Mammary epithelial cell (primary cell): ENCODE measurements at regions of chr21 and their contacts with region 1.

Region 1: GRCh38 chr21:31659536-31660258 is at the start of gene SOD1:
- DNase-seq: peak; percentile 91
- H3K4me3 ChIP-seq: peak within 1 kb of the TSS; percentile 95 to 99 (median 96)
- H3K27ac ChIP-seq: peak within 1 kb of the TSS; percentile 57
- H3K4me1 ChIP-seq: peaks cover 11% of the 10 kb centered on the region
- H3K27me3 ChIP-seq: no peaks in the 10 kb centered on the region
- CTCF ChIP-seq: no peak
- total RNA-seq, gene SOD1: 104 to 184 TPM

Region 2: DNA sequence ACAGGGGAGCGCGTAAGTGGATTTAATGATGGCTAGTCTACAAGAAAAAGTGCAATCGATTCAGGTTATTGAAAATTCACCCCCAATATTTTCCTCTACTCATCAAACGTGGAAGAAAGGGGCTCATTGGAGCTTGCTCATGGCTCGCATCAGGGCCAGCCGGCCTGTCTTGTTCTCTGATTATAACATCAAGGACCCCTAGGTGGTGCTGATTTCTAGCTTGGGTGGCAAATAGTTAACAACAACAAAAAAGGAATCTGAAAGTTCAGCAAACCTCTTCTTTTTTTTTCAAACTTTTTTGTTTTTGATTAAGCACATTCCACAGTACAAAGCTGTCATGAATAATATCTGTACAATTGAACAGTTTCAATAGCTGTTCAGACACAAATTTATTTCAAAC is 36.0 kb before region 1 on chr21:
- CTCF ChIA-PET with region 1: no interaction called
- dilution Hi-C with region 1: no loop called
- in situ Hi-C with region 1: no loop called
- intact Hi-C with region 1: loop called (anchors 5 kb)
- DNase-seq: no peak
- H3K4me3 ChIP-seq: no peak overlapping the region
- H3K27ac ChIP-seq: no peak overlapping the region
- H3K4me1 ChIP-seq: no peaks in the 10 kb centered on the region
- H3K27me3 ChIP-seq: no peaks in the 10 kb centered on the region
- CTCF ChIP-seq: peak in 1 of 2 donors; percentile 7

Region 3: DNA sequence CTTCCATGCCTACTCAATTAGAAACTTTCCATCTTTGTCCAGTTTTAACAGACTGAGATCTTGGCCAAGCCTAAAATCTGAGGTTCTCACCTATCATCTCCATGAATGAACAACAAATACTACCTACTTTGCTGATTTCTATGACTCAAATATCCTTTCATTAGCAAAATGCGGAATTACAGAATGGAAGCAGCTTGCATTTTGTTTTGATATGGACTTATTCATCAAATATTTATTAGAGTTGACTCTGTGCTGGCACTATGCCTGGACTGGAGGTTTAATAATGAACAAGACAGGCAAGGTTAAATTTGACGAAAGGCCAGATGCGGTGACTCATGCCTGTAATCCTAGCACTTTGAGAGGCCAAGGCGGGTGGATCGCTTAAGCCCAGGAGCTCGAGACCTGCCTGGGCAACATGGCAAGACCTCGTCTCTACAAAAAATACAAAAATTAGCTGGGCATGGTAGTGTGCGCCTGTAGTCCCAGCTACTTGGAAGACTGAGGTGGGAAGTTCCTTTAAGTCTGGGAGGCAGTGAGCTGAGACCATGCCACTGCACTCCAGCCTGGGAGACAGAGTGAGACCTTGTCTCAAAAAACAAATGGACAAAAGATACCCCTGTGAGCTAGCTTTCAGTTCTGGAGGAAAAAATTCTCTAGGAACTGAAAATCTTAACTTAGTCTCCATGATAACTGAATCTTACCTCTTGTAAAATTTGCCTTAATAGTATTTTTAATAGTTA is 29.6 kb before region 1 on chr21:
- CTCF ChIA-PET with region 1: no interaction called
- dilution Hi-C with region 1: no loop called
- in situ Hi-C with region 1: no loop called
- intact Hi-C with region 1: loop called (anchors 2 kb)
- DNase-seq: peak; percentile 98
- H3K4me3 ChIP-seq: no peak overlapping the region
- H3K27ac ChIP-seq: peak overlapping the region; percentile 16
- H3K4me1 ChIP-seq: peaks cover 24% of the 10 kb centered on the region
- H3K27me3 ChIP-seq: no peaks in the 10 kb centered on the region
- CTCF ChIP-seq: no peak

Region 4: GRCh38 chr21:31731802-31732596 is 72.3 kb after region 1 on chr21 and contains the start of gene SCAF4:
- CTCF ChIA-PET with region 1: no interaction called
- dilution Hi-C with region 1: no loop called
- in situ Hi-C with region 1: no loop called
- intact Hi-C with region 1: loop called (anchors 2 kb)
- DNase-seq: peak; percentile 87
- H3K4me3 ChIP-seq: peak within 1 kb of the TSS; percentile 81 to 94 (median 84)
- H3K27ac ChIP-seq: peak within 1 kb of the TSS; percentile 76
- H3K4me1 ChIP-seq: peaks cover 27% of the 10 kb centered on the region
- H3K27me3 ChIP-seq: no peaks in the 10 kb centered on the region
- CTCF ChIP-seq: no peak
- total RNA-seq, gene SCAF4: 9.5 to 34.8 TPM